H1 (cell line): ENCODE measurements at regions of chr5 and their contacts with region 1.

Region 1: DNA sequence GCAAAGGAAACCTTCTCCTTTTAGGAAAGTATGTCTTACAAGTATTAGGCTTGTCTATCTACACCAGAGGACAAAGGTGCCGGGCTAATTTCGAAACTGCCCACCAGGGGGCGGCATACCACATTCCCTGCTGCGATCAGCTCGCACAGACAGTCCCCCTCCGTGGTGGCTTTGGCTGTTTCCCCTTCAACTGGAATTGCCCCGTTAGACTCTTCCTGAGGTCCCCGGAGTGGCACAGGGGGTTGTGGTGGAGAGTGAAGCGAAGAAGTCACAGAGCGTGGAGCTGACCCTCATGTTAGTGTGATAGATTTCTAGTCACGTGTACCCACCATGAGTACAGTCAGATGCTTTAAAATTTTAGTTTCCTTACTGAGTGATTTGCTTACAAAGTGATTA is 17.5 kb downstream of the PTTG1 start:
- DNase-seq: peak; percentile 83 to 99
- H3K4me3 ChIP-seq: peak overlapping the region in 3 of 4 experiments; percentile 8 to 54 (median 36); a peak in 5 of 8 replicates
- H3K27ac ChIP-seq: no peak overlapping the region
- H3K4me1 ChIP-seq: no peaks in the 10 kb centered on the region
- H3K27me3 ChIP-seq: no peaks in the 10 kb centered on the region
- CTCF ChIP-seq: peak; percentile 82 to 91 (median 88)
- EP300 ChIP-seq: no peak
- POLR2A ChIP-seq: no peak
- RAD21 ChIP-seq: peak; percentile 71 to 78

Region 2: DNA sequence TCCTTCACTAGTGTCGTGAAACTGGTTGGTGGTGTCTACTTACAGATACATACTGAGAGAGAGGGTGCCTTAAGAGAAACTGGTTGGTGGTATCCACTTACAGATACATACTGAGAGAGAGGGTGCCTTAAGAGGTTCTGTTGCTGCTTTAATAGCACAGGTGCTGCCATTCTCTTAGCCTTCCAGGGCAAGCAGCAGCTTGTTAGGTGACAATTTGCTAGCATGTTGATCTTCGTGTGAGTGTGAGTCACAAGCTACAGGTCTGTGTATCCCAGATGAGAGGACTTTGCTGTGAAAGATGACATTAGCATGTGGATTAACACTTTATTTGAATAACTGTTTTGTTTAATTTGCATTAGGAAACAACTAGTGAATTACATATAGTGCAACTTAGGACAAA is 16.1 kb before region 1 on chr5:
- CTCF ChIA-PET with region 1: interaction called, 16 read pairs
- POLR2A ChIA-PET with region 1: interaction called, 6 read pairs
- DNase-seq: no peak
- H3K4me3 ChIP-seq: peak overlapping the region in 2 of 4 experiments; percentile 65 to 69; a peak in 3 of 8 replicates
- H3K27ac ChIP-seq: no peak overlapping the region
- H3K4me1 ChIP-seq: peaks cover 0 to 7% (median 3%) of the 10 kb centered on the region in 4 experiments; a peak in 3 of 7 replicates
- H3K27me3 ChIP-seq: no peaks in the 10 kb centered on the region
- CTCF ChIP-seq: no peak
- EP300 ChIP-seq: no peak
- POLR2A ChIP-seq: no peak
- RAD21 ChIP-seq: no peak

Region 3: DNA sequence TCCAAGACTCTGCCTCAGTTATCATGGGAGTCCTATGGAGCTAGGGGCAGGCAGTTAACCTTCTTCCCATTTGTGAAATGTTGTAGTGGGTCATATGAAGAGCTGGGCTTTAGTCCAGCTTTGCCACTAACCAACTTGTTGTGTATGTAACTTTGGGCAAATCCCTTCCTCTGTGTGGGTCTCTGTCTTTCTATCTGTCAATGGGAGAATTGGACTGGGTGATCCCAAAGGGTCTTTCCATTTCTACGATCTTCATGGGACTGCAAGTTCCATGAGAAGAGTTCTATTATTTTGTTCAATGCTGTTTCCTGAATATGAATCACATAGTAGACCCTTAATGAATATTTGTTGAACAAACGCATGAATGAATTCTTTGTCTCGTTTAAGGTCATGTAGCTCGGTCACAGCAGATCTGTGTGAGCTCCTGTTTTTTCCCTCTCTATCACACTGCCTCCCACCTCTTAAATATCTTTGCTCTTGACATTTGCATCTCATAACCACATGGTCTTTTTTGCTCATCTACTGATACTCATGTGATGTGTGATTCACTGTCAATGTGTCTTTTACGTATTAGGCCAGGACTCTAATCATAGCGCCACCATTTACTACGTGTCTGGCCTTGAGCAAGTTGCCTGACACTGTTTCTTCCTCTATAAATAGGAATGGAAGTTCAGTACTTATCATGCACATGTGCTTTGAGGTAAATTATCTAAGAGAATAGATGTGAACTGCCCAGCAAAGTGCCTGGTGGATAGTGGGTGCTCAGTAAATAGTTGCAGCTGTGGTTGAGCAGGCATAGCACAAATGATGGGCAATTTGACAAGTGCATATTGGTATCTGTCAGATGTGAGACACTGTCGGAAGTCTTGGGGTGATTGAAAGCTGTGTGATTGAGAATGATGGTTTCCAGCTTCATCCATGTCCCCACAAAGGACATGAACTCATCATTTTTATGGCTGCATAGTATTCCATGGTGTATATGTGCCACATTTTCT is 19.9 kb after region 1 on chr5:
- CTCF ChIA-PET with region 1: interaction called, 47 read pairs
- POLR2A ChIA-PET with region 1: no interaction called
- DNase-seq: no peak
- H3K4me3 ChIP-seq: no peak overlapping the region
- H3K27ac ChIP-seq: no peak overlapping the region
- H3K4me1 ChIP-seq: no peaks in the 10 kb centered on the region
- H3K27me3 ChIP-seq: no peaks in the 10 kb centered on the region
- CTCF ChIP-seq: no peak
- EP300 ChIP-seq: no peak
- POLR2A ChIP-seq: no peak
- RAD21 ChIP-seq: no peak

Region 4: DNA sequence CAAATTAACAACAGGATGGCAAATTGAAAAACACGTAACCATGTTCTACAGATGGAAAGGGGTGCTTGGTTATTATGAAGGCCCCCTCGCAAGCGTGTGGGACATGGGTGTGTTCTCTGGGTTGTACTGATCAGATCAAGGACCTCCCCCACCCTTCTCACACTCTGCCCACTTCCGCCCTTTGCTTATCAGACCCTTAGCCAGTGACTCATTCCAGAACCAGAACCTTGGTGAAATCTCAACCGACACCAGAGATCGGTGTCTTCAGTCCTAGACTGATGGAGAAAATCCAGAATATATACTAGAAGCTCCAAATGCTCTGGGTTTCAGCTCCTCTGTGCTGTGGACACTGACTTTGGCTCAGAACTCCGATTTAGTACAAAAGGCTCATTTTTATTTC is 47.4 kb after region 1 on chr5:
- CTCF ChIA-PET with region 1: interaction called, 29 read pairs
- POLR2A ChIA-PET with region 1: no interaction called
- DNase-seq: no peak
- H3K4me3 ChIP-seq: no peak overlapping the region
- H3K27ac ChIP-seq: no peak overlapping the region
- H3K4me1 ChIP-seq: peaks cover 2 to 12% (median 8%) of the 10 kb centered on the region in 4 experiments; a peak in 6 of 7 replicates
- H3K27me3 ChIP-seq: no peaks in the 10 kb centered on the region
- CTCF ChIP-seq: no peak
- EP300 ChIP-seq: no peak
- POLR2A ChIP-seq: no peak
- RAD21 ChIP-seq: no peak

Region 5: DNA sequence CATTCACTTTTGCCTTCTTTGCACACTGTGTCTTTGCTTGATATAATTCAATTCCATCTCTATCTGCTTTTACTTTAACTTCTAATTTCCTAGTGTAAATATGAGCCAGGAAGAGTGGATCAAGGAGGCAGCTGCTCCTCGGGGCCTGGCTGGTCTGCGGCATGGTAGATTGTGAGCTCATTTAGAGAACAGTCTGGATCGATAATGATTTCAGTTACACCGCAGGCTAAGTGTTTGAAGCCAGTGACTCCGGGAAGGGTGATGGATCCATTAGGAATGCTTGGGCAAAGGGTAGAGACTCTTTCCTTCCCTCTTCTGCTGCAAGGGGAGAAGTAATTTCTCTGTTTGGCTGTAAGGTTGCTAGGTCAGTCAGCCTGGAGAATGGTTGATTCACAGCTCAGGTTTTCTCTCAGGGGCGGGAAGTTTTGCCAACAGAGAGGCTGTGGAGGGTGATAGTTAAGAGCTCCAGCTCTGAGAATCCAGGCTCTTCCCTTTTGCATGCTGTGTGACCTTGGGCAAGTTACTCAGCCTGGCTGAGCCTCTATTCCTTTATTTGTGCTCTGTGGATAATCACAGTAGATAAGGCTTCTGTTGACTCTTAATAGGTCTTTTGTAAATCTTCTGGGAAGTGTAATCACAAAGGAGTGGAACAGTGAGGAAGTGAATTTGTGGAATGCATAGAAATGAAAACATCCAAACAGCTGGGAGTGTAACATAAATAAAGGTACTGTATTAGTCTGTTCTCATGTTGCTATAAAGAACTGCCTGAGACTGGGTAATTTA is 81.6 kb after region 1 on chr5:
- CTCF ChIA-PET with region 1: interaction called, 24 read pairs
- POLR2A ChIA-PET with region 1: no interaction called
- DNase-seq: no peak
- H3K4me3 ChIP-seq: no peak overlapping the region
- H3K27ac ChIP-seq: no peak overlapping the region
- H3K4me1 ChIP-seq: no peaks in the 10 kb centered on the region
- H3K27me3 ChIP-seq: no peaks in the 10 kb centered on the region
- CTCF ChIP-seq: no peak
- EP300 ChIP-seq: no peak
- POLR2A ChIP-seq: no peak
- RAD21 ChIP-seq: no peak

Region 6: GRCh38 chr5:160675988-160676387 is 236.8 kb after region 1 on chr5:
- CTCF ChIA-PET with region 1: interaction called, 10 read pairs
- POLR2A ChIA-PET with region 1: no interaction called
- DNase-seq: no peak
- H3K4me3 ChIP-seq: no peak overlapping the region
- H3K27ac ChIP-seq: no peak overlapping the region
- H3K4me1 ChIP-seq: no peaks in the 10 kb centered on the region
- H3K27me3 ChIP-seq: peaks cover 0 to 1% (median 0%) of the 10 kb centered on the region in 4 experiments; a peak in 1 of 7 replicates
- CTCF ChIP-seq: no peak
- EP300 ChIP-seq: no peak
- POLR2A ChIP-seq: no peak
- RAD21 ChIP-seq: peak; percentile 4 to 25; a peak in 2 of 4 replicates